B cell (primary cell): ENCODE measurements at regions of chr9 and their contacts with region 1.

Region 1: DNA sequence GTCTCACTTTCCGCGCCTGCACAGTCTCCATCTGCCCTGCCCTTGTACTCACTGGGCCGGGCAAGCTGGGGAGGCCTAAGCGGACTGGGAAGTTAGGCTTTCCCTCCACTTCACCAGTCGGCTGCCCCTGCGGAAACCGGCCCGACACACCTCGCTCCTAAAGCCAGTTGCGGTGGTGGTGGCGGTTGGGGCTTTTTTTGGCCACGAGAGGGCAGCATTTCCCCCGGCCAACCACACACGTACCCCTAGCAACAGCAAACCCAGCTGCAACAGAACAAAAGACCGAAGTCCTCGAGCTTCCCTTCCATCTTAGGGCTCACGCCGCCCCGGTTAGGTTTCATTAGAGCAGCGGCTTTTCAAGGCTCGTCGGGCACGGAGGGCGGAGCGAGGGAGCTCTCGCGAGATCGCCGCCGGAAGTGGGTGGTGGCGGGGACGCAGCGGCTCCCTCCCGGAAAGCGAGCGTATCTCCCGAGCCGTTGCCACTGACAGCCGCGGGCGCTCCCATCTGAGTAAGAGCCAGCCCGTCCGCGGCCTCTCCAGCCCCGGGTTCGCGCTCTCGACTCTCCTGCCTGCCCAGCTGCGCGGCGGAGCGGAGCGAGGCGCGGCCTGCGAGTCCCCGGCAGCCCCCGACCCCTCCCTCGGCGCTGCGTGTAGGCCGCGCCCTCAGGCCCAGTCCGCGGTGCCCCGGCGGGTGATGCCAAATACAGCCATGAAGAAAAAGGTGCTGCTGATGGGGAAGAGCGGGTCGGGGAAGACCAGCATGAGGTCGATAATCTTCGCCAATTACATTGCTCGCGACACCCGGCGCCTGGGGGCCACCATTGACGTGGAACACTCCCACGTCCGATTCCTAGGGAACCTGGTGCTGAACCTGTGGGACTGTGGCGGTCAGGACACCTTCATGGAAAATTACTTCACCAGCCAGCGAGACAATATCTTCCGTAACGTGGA is at the start of gene RRAGA:
- DNase-seq: peak; percentile 97
- ATAC-seq: peak; percentile 89
- H3K4me3 ChIP-seq: peak within 1 kb of the TSS; percentile 69 to 92 (median 78)
- H3K4me3 Mint-ChIP-seq: peak within 1 kb of the TSS; percentile 98
- H3K27ac ChIP-seq: peak within 1 kb of the TSS; percentile 92 to 95
- H3K27ac Mint-ChIP-seq: peak within 1 kb of the TSS; percentile 99
- H3K4me1 ChIP-seq: peaks cover 24 to 32% of the 10 kb centered on the region in 2 donors
- H3K4me1 Mint-ChIP-seq: peaks cover 36% of the 10 kb centered on the region
- H3K27me3 ChIP-seq: no peaks in the 10 kb centered on the region
- H3K27me3 Mint-ChIP-seq: no peaks in the 10 kb centered on the region
- CTCF ChIP-seq: peak; percentile 79
- total RNA-seq, gene RRAGA: 49.2 and 52.1 TPM in 2 replicates

Region 2: DNA sequence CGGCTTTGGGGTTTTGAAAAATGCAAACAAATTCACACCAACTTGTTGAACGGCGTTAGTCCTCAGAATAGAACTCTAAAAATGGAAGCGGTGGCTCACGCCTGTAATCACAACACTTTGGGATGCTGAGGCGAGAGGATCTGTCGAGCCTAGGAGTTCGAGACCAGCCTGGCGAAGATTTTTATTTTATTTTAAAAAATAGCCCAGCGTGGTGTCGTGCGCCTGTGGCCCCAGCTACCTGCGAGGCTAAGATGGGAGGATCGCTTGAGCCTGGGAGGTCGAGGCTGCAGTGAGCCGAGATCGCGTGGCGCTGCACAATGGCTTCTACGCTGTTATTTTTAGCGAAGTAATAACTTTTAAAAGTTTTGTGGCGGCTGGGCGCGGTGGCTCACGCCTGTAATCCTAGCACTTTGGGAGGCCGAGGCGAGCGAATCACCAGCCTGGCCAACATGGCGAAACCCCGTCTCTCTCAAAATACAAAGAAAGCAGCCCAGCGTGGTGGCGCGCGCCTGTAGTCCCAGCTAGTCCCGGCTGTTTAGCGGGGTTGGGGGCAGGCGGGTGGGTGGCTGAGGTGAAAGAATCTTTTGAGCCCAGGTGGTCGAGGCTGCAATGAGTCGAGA is 78.8 kb after region 1 on chr9:
- CTCF ChIA-PET with region 1: interaction called, 8 read pairs
- POLR2A ChIA-PET with region 1: interaction called, 5 read pairs
- intact Hi-C with region 1: loop called (anchors 2 kb)
- DNase-seq: no peak
- ATAC-seq: peak; percentile 10
- H3K4me3 ChIP-seq: peak overlapping the region; percentile 72 to 82 (median 77)
- H3K4me3 Mint-ChIP-seq: peak overlapping the region; percentile 96
- H3K27ac ChIP-seq: peak overlapping the region; percentile 66 to 67
- H3K27ac Mint-ChIP-seq: peak overlapping the region; percentile 88
- H3K4me1 ChIP-seq: peaks cover 5 to 26% of the 10 kb centered on the region in 2 donors
- H3K4me1 Mint-ChIP-seq: peaks cover 28% of the 10 kb centered on the region
- H3K27me3 ChIP-seq: no peaks in the 10 kb centered on the region
- H3K27me3 Mint-ChIP-seq: no peaks in the 10 kb centered on the region
- CTCF ChIP-seq: no peak

Region 3: GRCh38 chr9:19230356-19231125 is 181.3 kb after region 1 on chr9 and contains the start of gene DENND4C:
- CTCF ChIA-PET with region 1: no interaction called
- POLR2A ChIA-PET with region 1: interaction called, 11 read pairs
- intact Hi-C with region 1: loop called (anchors 1 kb)
- DNase-seq: peak; percentile 87
- ATAC-seq: peak; percentile 76
- H3K4me3 ChIP-seq: peak within 1 kb of the TSS; percentile 79 to 89 (median 83)
- H3K4me3 Mint-ChIP-seq: no peak within 1 kb of the TSS
- H3K27ac ChIP-seq: peak within 1 kb of the TSS; percentile 28 to 72
- H3K27ac Mint-ChIP-seq: peak within 1 kb of the TSS; percentile 88
- H3K4me1 ChIP-seq: peaks cover 23 to 27% of the 10 kb centered on the region in 2 donors
- H3K4me1 Mint-ChIP-seq: peaks cover 15% of the 10 kb centered on the region
- H3K27me3 ChIP-seq: no peaks in the 10 kb centered on the region
- H3K27me3 Mint-ChIP-seq: no peaks in the 10 kb centered on the region
- CTCF ChIP-seq: no peak
- total RNA-seq, gene DENND4C: 44.8 and 52.4 TPM in 2 replicates

Region 4: DNA sequence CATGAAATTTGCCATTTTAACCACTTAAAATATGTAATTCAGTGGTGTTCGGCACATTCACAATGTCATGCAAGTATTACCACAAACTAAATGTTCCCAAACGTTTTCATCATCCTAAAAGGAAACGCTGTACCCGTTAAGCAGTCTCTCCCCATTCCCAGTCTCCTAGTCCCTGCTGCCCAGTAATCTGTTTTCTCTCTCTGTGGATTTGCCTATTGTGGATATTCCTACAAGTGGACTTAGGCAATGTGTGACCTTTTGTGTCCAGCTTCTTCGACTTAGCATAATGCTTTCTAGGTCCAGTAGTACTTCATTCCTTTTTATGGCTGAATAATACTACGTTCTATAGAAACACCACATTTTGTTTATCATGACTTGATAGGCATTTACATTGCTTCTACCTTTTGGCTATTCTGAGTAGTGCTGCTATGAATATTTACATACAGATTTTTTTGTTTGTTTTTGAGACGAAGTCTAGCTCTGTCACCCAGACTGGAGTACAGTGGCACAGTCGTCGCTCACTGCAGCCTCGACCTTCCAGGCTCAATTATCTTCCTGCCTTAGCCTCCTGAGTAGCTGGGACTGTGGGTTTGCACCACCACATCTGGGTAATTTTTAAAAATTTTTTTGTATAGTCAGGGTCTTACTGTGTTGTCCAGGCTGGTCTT is 194.3 kb after region 1 on chr9:
- CTCF ChIA-PET with region 1: no interaction called
- POLR2A ChIA-PET with region 1: no interaction called
- intact Hi-C with region 1: no loop called
- DNase-seq: no peak
- ATAC-seq: no peak
- H3K4me3 ChIP-seq: no peak overlapping the region
- H3K4me3 Mint-ChIP-seq: no peak overlapping the region
- H3K27ac ChIP-seq: no peak overlapping the region
- H3K27ac Mint-ChIP-seq: no peak overlapping the region
- H3K4me1 ChIP-seq: no peaks in the 10 kb centered on the region
- H3K4me1 Mint-ChIP-seq: peaks cover 18% of the 10 kb centered on the region
- H3K27me3 ChIP-seq: no peaks in the 10 kb centered on the region
- H3K27me3 Mint-ChIP-seq: no peaks in the 10 kb centered on the region
- CTCF ChIP-seq: no peak

Region 5: DNA sequence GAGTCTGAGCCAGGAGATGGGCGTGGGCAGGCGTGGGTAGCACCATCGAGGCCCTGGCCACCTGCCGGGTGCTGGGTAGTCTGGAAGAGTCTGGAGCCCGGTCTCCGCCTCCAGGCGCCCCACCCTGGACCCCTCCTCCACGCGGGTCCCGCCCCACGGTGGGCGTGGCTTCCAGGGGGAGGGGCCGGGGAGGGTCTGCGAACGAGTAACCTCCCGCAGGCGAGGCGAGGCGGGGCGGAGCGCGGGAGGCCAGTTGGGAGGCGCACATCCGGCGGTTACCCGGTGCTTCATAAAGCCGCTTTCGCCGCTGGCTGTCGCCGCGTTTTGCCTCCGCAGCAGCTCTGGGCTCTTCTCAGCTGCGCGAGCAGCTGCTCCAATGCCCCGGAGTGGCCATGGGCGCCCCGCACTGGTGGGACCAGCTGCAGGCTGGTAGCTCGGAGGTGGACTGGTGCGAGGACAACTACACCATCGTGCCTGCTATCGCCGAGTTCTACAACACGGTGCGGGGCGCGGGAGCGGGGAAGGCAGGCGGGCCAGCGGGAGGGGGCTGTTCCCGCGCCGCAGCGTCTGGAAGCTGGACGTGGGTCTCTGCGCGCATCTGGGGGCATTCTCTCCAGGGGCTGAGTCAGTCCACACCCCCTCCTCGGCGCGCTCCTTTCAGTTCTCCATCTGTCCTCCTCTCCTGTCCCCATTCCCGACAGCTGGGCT is 359.6 kb after region 1 on chr9 and contains the start of gene ACER2:
- CTCF ChIA-PET with region 1: no interaction called
- POLR2A ChIA-PET with region 1: no interaction called
- intact Hi-C with region 1: loop called (anchors 1 kb)
- DNase-seq: peak; percentile 92
- ATAC-seq: peak; percentile 97
- H3K4me3 ChIP-seq: peak within 1 kb of the TSS; percentile 77 to 94 (median 92)
- H3K4me3 Mint-ChIP-seq: peak within 1 kb of the TSS; percentile 94
- H3K27ac ChIP-seq: peak within 1 kb of the TSS; percentile 31 to 51
- H3K27ac Mint-ChIP-seq: peak within 1 kb of the TSS; percentile 86
- H3K4me1 ChIP-seq: peaks cover 12 to 15% of the 10 kb centered on the region in 2 donors
- H3K4me1 Mint-ChIP-seq: peaks cover 12% of the 10 kb centered on the region
- H3K27me3 ChIP-seq: no peaks in the 10 kb centered on the region
- H3K27me3 Mint-ChIP-seq: no peaks in the 10 kb centered on the region
- CTCF ChIP-seq: no peak
- total RNA-seq, gene ACER2: 5.5 and 6.1 TPM in 2 replicates

Region 6: GRCh38 chr9:19464764-19465585 is 415.7 kb after region 1 on chr9:
- CTCF ChIA-PET with region 1: interaction called, 25 read pairs
- POLR2A ChIA-PET with region 1: no interaction called
- intact Hi-C with region 1: no loop called
- DNase-seq: peak; percentile 83
- ATAC-seq: peak; percentile 92
- H3K4me3 ChIP-seq: peak overlapping the region in 3 of 5 experiments; percentile 43 to 75 (median 56)
- H3K4me3 Mint-ChIP-seq: peak overlapping the region; percentile 92
- H3K27ac ChIP-seq: no peak overlapping the region
- H3K27ac Mint-ChIP-seq: peak overlapping the region; percentile 62
- H3K4me1 ChIP-seq: peaks cover 4 to 9% of the 10 kb centered on the region in 2 donors
- H3K4me1 Mint-ChIP-seq: peaks cover 14% of the 10 kb centered on the region
- H3K27me3 ChIP-seq: no peaks in the 10 kb centered on the region
- H3K27me3 Mint-ChIP-seq: no peaks in the 10 kb centered on the region
- CTCF ChIP-seq: peak; percentile 90